IMR-90 (cell line): ENCODE measurements at regions of chr19 and their contacts with region 1.

Region 1: DNA sequence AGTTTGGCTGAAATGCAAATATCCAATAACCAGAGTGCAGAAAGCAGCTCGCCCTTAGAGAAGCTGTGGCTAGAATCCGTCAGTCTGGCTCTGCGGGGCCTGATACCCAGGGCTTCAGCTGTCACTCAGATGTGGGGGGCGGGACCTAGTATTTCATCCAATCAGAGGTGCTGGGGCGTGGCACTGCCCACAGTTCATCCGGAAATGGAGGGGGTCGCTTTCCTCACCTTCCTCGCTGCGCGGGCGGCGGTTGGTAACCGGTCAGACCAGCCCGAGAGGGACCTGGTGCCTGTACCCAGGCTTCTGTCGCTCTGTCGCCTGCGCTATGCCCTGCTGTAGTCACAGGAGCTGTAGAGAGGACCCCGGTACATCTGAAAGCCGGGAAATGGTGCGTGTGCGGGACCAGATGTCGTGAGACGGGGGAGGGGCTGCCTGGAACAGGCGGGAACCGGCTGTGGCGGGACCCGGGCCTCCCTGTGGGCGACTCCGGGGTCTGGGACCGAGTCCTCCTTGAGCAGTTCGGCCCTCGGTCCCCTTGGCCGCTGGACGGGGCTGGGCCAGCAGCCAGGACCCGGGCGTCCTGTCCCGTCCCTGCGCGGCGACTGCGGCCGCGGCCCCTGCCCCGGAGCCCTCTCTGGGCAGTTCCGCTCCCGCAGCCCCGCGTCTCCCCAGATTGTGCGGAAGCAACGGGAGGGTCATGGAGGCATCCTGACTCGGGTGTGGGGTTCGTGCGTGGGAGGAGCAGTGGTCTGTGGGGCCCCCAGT is at the start of gene ZNF700:
- DNase-seq: peak; percentile 86
- ATAC-seq: peak; percentile 96
- H3K4me3 ChIP-seq: peak within 1 kb of the TSS; percentile 93
- H3K27ac ChIP-seq: peak within 1 kb of the TSS; percentile 97
- H3K4me1 ChIP-seq: peaks cover 4% of the 10 kb centered on the region; the same call in 1 of the 2 replicates
- H3K27me3 ChIP-seq: no peaks in the 10 kb centered on the region
- CTCF ChIP-seq: no peak
- POLR2A ChIP-seq: peak; percentile 72; the same call in 1 of the 2 replicates
- RAD21 ChIP-seq: no peak
- total RNA-seq, gene ZNF700: 10.2 and 11.9 TPM in 2 replicates

Region 2: GRCh38 chr19:11964858-11965645 is 40.0 kb after region 1 on chr19 and contains the start of gene ZNF763:
- CTCF ChIA-PET with region 1: interaction called, 8 read pairs
- POLR2A ChIA-PET with region 1: no interaction called
- dilution Hi-C with region 1: no loop called
- in situ Hi-C with region 1: no loop called
- intact Hi-C with region 1: loop called (anchors 1 kb)
- DNase-seq: peak; percentile 75
- ATAC-seq: peak; percentile 95
- H3K4me3 ChIP-seq: peak within 1 kb of the TSS; percentile 77
- H3K27ac ChIP-seq: peak within 1 kb of the TSS; percentile 78
- H3K4me1 ChIP-seq: peaks cover 2% of the 10 kb centered on the region; the same call in 1 of the 2 replicates
- H3K27me3 ChIP-seq: no peaks in the 10 kb centered on the region
- CTCF ChIP-seq: no peak
- POLR2A ChIP-seq: peak; percentile 21; the same call in 1 of the 2 replicates
- RAD21 ChIP-seq: no peak
- total RNA-seq, gene ZNF763: 0.56 and 0.90 TPM in 2 replicates

Region 3: GRCh38 chr19:12052497-12053169 is 127.6 kb after region 1 on chr19 and contains the start of gene ZNF878:
- CTCF ChIA-PET with region 1: no interaction called
- POLR2A ChIA-PET with region 1: no interaction called
- dilution Hi-C with region 1: no loop called
- in situ Hi-C with region 1: no loop called
- intact Hi-C with region 1: loop called (anchors 10 kb)
- DNase-seq: peak; percentile 85
- ATAC-seq: peak; percentile 100
- H3K4me3 ChIP-seq: peak within 1 kb of the TSS; percentile 88
- H3K27ac ChIP-seq: peak within 1 kb of the TSS; percentile 73
- H3K4me1 ChIP-seq: no peaks in the 10 kb centered on the region
- H3K27me3 ChIP-seq: no peaks in the 10 kb centered on the region
- CTCF ChIP-seq: no peak; the same call in 1 of the 2 replicates
- POLR2A ChIP-seq: peak; percentile 91
- RAD21 ChIP-seq: no peak
- total RNA-seq, gene ZNF878: 0.28 and 0.36 TPM in 2 replicates